Activated CD4-positive, alpha-beta memory T cell treated with anti-CD3 and anti-CD28 coated beads, Interleukin-2, amount 10 ng/mL, durations not matched to agents 7 days and 5 days (primary cell): ENCODE measurements at regions of chr17 and their contacts with region 1.

Region 1: DNA sequence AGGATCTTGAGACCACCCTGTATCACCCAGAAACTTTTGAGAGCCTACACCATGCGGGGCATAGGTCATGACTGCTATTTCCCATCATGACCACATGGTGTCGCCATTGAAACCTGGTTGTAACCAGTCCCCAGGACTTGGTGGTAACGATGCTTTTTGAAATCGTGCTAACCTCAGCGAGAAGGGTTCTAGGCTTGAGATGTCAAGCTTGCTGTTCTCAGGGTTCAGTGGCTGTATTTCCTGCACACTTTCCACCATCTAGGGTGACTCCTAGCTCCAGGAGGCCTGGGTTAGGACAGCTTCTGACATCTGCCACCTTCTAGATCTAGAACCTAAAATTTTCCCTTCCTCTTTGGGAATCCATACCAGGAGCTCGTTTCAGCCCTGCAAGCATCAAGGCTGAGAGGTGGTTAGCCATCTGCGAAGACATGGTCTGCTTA is 13.0 kb upstream of the SPNS3 start:
- DNase-seq: peak; percentile 68
- H3K4me3 Mint-ChIP-seq: no peak overlapping the region
- H3K27ac Mint-ChIP-seq: no peak overlapping the region
- H3K4me1 Mint-ChIP-seq: peaks cover 4% of the 10 kb centered on the region
- H3K27me3 Mint-ChIP-seq: no peaks in the 10 kb centered on the region

Region 2: DNA sequence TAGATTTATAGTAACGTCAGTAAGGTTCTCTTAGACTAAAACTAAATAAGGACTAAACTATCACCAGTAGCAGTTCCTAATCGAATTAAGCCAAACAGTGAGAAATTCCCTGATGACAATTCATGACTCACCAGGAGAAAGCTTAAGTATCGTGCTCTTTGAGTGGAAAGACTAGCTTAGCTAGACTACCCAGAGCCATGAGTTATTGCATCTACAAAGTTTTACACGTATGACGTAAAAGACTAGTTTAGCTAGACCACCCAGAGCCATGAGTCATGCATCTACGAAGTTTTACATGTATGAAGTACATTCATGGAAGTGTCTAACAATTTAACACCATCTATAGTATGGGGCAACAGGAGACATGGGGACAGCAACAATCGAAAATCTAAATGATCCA is 90.9 kb before region 1 on chr17:
- CTCF ChIA-PET with region 1: no interaction called
- POLR2A ChIA-PET with region 1: no interaction called
- DNase-seq: no peak
- H3K4me3 Mint-ChIP-seq: no peak overlapping the region
- H3K27ac Mint-ChIP-seq: no peak overlapping the region
- H3K4me1 Mint-ChIP-seq: peaks cover 28% of the 10 kb centered on the region
- H3K27me3 Mint-ChIP-seq: no peaks in the 10 kb centered on the region

Region 3: DNA sequence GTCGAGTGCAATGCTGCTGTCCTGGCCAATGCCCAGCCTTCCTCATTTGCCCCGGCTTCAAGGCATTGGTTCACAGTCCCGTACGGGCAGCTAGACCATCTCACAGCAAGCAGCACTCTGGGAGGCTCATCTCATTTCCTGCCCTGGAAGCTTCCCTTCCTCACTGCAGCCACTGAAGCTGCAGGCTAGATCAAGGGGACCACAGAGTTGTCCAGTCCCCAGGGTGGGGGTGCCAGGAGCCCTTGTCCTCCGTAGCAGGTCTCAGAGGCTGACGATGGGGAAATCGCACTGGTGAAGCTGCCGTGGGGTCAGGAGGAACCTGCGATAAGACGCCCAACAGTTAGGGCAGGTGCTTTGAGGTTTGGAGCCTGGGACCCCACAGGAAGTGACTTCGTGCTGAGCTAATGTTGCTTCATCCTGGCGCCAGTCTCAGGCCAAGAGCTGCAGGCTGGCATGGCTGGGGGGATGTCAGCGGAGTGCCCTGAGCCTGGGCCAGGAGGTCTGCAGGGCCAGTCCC is 12.9 kb after region 1 on chr17 and contains the start of gene SPNS3:
- CTCF ChIA-PET with region 1: interaction called, 10 read pairs
- POLR2A ChIA-PET with region 1: interaction called, 4 read pairs
- DNase-seq: peak; percentile 63
- H3K4me3 Mint-ChIP-seq: peak within 1 kb of the TSS; percentile 58
- H3K27ac Mint-ChIP-seq: peak within 1 kb of the TSS; percentile 78
- H3K4me1 Mint-ChIP-seq: peaks cover 34% of the 10 kb centered on the region
- H3K27me3 Mint-ChIP-seq: peaks cover 5% of the 10 kb centered on the region
- total RNA-seq, gene SPNS3: 14.1 to 14.2 TPM

Region 4: GRCh38 chr17:4498461-4499397 is 78.0 kb after region 1 on chr17 and contains the start of gene SPNS2:
- CTCF ChIA-PET with region 1: interaction called, 10 read pairs
- POLR2A ChIA-PET with region 1: no interaction called
- DNase-seq: peak; percentile 57
- H3K4me3 Mint-ChIP-seq: peak within 1 kb of the TSS; percentile 56
- H3K27ac Mint-ChIP-seq: no peak within 1 kb of the TSS
- H3K4me1 Mint-ChIP-seq: peaks cover 13% of the 10 kb centered on the region
- H3K27me3 Mint-ChIP-seq: peaks cover 61% of the 10 kb centered on the region
- total RNA-seq, gene SPNS2: 0.15 to 0.60 TPM

Region 5: GRCh38 chr17:4625181-4625617 is 204.5 kb after region 1 on chr17:
- CTCF ChIA-PET with region 1: interaction called, 11 read pairs
- POLR2A ChIA-PET with region 1: interaction called, 3 read pairs
- DNase-seq: no peak
- H3K4me3 Mint-ChIP-seq: no peak overlapping the region
- H3K27ac Mint-ChIP-seq: no peak overlapping the region
- H3K4me1 Mint-ChIP-seq: peaks cover 3% of the 10 kb centered on the region
- H3K27me3 Mint-ChIP-seq: peaks cover 34% of the 10 kb centered on the region